Head of caudate nucleus (tissue), 42 donors: ENCODE measurements at regions of chr11 and their contacts with region 1.

Region 1: GRCh38 chr11:76919887-76920746 is 59.4 kb downstream of the ACER3 start:
- DNase-seq: peak; percentile 32 to 92 (median 74)

Region 2: GRCh38 chr11:76704121-76704948 is 215.8 kb before region 1 on chr11:
- intact Hi-C with region 1: no loop called
- DNase-seq: no peak

Region 3: DNA sequence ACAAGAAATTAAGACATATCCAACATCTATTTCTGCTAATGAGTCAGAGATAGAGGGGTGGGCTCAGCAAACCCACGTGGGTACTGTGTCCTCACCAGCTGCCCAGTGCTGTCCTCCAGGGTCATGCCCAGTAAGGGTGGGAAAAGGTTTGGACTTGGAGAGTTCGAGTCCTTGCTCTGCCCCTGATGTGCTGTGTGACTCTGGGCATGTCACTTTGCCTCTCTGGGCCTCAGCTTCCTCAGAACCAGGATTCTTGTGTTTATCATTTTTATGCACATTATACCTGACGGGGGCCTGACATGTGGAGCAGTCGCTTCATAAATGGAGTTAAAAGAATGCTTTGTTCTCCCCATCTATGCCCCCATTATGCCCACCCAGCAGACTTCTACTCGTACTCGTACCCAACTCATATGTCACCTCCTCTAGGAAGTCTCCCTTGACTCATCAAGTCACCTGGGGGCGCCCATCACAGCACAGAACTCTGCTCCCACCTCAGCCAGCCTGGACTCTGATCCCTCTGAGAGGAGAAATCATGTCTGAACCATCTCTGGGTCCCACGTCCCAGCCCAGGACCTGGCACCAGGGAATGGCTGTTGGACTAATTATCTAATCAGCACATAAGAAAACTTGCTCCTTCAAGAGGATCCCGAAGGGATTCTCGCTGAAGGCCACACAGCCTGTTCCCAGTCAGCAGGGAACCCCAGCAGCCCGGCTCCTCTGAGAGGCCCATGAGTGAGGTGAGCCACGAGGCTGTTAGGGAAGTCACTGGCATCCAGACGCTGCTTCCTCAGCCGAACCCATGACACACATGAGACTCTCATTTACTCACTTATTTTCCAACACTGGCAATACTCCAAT is 175.7 kb before region 1 on chr11:
- intact Hi-C with region 1: no loop called
- DNase-seq: peak in 2 of 42 donors; percentile 17 to 51

Region 4: DNA sequence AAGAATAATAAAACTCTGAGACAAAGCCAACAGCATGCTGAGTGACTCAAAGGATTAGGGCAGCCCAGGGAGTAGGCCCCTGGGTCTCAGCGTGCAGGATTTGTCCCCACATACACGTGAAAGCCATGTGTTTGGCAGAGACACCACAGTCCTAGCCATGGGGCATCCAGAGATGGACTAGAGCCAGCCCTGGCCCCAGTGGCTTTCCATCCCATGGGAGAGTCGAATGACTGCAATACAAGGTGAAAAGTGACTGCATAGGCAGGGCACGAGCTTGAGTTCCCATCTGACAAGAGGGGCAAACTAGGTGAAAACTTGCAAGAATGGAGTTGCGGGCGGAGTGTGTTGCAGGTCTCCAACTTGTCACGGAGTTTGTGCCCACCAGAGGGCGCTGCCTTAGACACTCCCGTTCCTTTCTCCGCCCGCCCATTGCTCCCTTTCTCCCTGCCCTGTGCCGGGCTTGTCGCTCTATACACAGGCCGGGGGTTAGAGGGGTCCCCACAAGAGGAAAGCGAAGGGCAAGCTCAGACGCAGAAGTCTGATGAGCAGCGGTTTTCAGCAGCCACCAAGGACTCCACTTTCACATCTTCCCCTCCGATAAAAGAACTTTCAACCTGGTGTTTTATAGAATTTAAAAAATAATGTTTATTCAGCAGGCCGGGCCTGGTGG is 112.8 kb before region 1 on chr11:
- intact Hi-C with region 1: loop called (anchors 2 kb)
- DNase-seq: peak; percentile 81 to 97 (median 90)

Region 5: GRCh38 chr11:77053217-77054015 is 133.3 kb after region 1 on chr11:
- intact Hi-C with region 1: no loop called
- DNase-seq: no peak